Left cardiac atrium (tissue), 4 donors: ENCODE measurements at regions of chr3 and their contacts with region 1.

Region 1: GRCh38 chr3:10224784-10225665 is 23.2 kb upstream of the TATDN2 start:
- DNase-seq: peak; percentile 68
- ATAC-seq: peak; percentile 85 to 92

Region 2: GRCh38 chr3:10026084-10026890 is 198.7 kb before region 1 on chr3 and contains the start of gene FANCD2:
- intact Hi-C with region 1: loop called in 1 of 2 experiments (anchors 10 kb)
- DNase-seq: peak; percentile 89
- ATAC-seq: peak; percentile 96 to 98
- total RNA-seq, gene FANCD2: 0.71 to 1.8 TPM

Region 3: GRCh38 chr3:10164546-10165393 is 60.3 kb before region 1 on chr3 and contains the start of gene IRAK2:
- intact Hi-C with region 1: loop called (anchors 2 to 10 kb)
- DNase-seq: peak; percentile 84
- ATAC-seq: peak; percentile 97
- total RNA-seq, gene IRAK2: 1.7 to 1.8 TPM